Activated B cell treated with CpG ODN at 0.5 μM for 24 hours (primary cell): ENCODE measurements at regions of chr14 and their contacts with region 1.

Region 1: DNA sequence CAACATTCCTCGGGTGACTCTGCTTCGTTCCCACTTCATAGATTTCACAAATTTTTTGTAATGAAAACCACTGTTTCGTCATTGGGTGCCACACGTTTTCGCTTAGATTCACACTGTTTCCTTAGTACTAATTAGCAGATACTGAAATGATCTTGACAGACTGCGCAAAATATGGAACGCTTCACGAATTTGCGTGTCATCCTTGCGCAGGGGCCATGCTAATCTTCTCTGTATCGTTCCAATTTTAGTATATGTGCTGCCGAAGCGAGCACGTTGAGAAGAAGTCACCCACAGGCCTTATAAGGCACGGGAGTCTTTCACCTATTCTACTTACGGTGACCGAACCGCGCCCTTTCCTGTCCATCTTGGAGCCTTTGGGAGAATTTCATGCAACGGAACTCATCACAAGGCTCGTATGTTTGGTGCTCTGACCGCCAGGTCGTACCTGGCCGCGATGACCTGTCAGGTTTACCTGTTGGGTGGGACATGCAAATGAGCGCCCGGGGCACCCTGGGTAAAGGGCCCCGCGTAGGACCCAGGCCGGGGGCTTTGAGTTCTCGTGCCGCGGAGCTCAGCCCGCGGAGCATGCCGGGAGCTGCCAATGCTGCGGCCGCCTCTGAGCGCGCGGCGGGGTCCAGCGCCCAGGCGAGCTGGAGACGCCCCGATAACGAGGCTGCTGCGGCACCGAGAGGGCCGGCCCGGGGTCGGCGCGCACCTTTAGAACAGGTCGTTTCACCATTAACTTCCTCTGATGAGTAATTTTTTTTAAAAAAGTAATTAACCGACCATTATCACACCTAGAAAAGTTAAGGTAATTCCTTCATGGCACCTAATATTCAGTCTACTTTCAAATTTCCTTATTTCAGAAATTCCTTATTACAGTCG is at the start of gene RNU6-8:
- DNase-seq: peak; percentile 84
- ATAC-seq: peak; percentile 78
- H3K4me3 Mint-ChIP-seq: peak within 1 kb of the TSS; percentile 87
- H3K27ac Mint-ChIP-seq: peak within 1 kb of the TSS; percentile 100
- H3K4me1 Mint-ChIP-seq: peaks cover 51% of the 10 kb centered on the region
- H3K27me3 Mint-ChIP-seq: no peaks in the 10 kb centered on the region
- CTCF ChIP-seq: no peak
- total RNA-seq, gene RNU6-8: not detected in 2 replicates

Region 2: GRCh38 chr14:30874120-30874998 is 1328.9 kb before region 1 on chr14 and contains the start of gene COCH:
- CTCF ChIA-PET with region 1: no interaction called
- POLR2A ChIA-PET with region 1: no interaction called
- intact Hi-C with region 1: loop called (anchors 10 kb)
- DNase-seq: peak; percentile 66
- ATAC-seq: peak; percentile 76
- H3K4me3 Mint-ChIP-seq: peak within 1 kb of the TSS; percentile 88
- H3K27ac Mint-ChIP-seq: peak within 1 kb of the TSS; percentile 35
- H3K4me1 Mint-ChIP-seq: peaks cover 24% of the 10 kb centered on the region
- H3K27me3 Mint-ChIP-seq: peaks cover 11% of the 10 kb centered on the region
- CTCF ChIP-seq: no peak
- total RNA-seq, gene COCH: 10.2 and 10.4 TPM in 2 replicates

Region 3: DNA sequence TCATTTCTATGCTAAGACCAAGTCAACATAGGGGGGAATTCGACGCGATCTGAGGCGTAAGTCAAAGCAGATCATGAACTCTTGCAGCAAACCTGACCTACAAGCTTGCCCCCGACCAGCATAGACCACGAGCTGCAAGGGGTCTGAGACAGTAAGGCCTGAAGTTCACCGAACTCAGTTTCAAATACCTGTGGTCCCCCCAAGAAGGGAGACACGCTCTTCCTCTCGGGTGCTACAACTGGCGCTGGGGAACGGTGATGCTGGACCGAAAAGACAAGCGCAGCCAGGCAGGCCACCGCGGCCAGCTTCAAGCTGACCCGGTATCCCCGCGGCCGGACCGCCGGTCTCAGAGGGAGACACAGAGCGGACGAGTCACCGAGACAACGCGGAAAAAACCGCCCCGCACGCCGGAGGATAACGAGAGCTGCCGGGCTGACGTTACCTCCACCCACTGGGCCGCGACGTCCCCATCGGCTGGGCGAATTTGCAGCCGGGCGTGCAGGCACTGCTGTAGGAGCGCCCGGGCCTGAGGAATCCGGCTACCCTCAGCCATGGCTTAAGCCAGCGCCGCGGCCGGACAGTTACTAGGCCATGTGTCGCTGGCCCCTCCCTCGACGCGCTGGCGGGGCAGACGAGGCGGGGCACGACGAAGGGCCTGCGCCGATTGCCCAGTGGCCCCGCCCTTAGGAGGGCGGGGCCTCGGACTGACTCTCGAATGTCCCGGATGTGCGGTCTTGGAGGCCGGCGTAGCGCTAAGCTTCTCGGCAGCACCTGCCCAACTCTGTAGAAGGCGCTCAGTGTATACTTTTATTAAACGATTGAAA is 746.2 kb before region 1 on chr14 and contains the start of gene DTD2:
- CTCF ChIA-PET with region 1: no interaction called
- POLR2A ChIA-PET with region 1: interaction called, 4 read pairs
- intact Hi-C with region 1: loop called (anchors 1 kb)
- DNase-seq: peak; percentile 82
- ATAC-seq: peak; percentile 98
- H3K4me3 Mint-ChIP-seq: peak within 1 kb of the TSS; percentile 99
- H3K27ac Mint-ChIP-seq: peak within 1 kb of the TSS; percentile 96
- H3K4me1 Mint-ChIP-seq: peaks cover 31% of the 10 kb centered on the region
- H3K27me3 Mint-ChIP-seq: no peaks in the 10 kb centered on the region
- CTCF ChIP-seq: no peak
- total RNA-seq, gene DTD2: 19.8 and 21.3 TPM in 2 replicates

Region 4: DNA sequence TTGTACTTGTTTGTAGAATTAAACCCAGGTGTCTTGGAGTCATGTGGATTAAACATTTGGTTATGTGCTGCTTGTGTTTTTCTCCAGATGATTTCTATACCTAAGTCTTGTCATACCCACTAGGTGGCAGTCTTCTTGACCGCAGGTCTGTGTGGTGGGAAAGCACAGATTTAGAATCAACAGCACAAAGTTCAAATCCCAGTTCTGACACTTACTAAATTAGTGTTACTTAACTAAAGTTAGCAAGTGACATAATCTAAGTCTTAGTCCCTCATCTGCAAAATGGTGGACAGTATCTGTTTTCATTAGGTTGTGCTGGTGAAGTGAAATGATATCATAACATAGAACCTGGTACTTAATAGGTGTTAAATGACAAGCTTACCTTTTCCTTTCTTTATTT is 277.1 kb before region 1 on chr14:
- CTCF ChIA-PET with region 1: no interaction called
- POLR2A ChIA-PET with region 1: no interaction called
- intact Hi-C with region 1: loop called (anchors 5 kb)
- DNase-seq: no peak
- ATAC-seq: peak; percentile 47
- H3K4me3 Mint-ChIP-seq: no peak overlapping the region
- H3K27ac Mint-ChIP-seq: no peak overlapping the region
- H3K4me1 Mint-ChIP-seq: no peaks in the 10 kb centered on the region
- H3K27me3 Mint-ChIP-seq: no peaks in the 10 kb centered on the region
- CTCF ChIP-seq: no peak

Region 5: DNA sequence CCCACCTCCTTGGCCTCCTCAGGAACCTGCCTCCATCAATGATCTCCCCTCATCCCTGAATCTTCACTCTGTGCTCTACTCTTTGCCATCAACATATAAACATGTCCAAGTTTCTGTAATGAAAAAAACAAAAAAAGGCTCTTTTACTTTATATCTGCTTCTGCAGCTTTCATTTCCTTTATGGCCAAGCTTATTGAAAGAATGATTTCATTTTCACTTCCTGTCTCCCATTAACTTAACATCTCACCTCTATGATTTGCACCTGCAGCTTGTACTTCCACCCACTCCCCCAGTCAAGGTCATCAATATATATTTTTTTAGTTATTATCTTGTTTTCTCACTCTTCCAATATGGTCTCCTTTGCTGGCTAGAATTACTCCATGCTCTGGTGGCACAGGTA is 17.0 kb before region 1 on chr14:
- CTCF ChIA-PET with region 1: interaction called, 4 read pairs
- POLR2A ChIA-PET with region 1: interaction called, 3 read pairs
- intact Hi-C with region 1: loop called (anchors 2 kb)
- DNase-seq: no peak
- ATAC-seq: no peak
- H3K4me3 Mint-ChIP-seq: peak overlapping the region; percentile 60
- H3K27ac Mint-ChIP-seq: peak overlapping the region; percentile 80
- H3K4me1 Mint-ChIP-seq: peaks cover 21% of the 10 kb centered on the region
- H3K27me3 Mint-ChIP-seq: peaks cover 2% of the 10 kb centered on the region
- CTCF ChIP-seq: no peak

Region 6: DNA sequence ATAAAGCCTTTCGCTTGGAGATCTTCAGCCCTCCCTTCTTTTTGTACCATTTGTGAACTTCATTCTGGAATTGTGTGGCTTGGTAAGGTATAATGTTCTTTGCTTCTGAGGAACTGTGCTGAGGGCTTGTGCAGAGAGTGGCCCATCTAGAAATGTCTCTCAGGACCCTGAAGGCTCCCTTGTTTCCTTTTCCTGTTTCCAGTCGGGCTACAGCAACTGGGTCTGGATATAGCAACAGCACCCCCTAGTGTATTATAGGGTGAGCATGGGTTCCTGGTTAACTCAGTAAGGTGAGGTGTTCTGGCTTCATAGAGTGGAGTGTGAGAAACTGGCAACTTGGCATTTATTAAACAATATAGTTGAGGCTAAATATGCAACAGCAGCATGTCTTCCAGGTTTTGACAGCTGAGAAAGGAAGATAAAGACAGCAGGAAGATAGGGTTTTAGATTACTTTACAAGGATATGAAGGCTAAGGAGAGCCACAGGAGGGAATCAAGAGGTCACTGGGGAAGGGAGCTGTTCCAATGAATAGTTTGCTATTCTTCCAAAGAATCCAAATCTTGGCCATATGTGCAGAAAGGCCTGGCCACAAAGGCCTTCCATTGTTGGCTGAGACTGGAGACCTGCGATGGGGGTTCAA is 48.9 kb after region 1 on chr14:
- CTCF ChIA-PET with region 1: interaction called, 5 read pairs
- POLR2A ChIA-PET with region 1: interaction called, 3 read pairs
- intact Hi-C with region 1: loop called (anchors 2 kb)
- DNase-seq: no peak
- ATAC-seq: peak; percentile 88
- H3K4me3 Mint-ChIP-seq: no peak overlapping the region
- H3K27ac Mint-ChIP-seq: no peak overlapping the region
- H3K4me1 Mint-ChIP-seq: no peaks in the 10 kb centered on the region
- H3K27me3 Mint-ChIP-seq: no peaks in the 10 kb centered on the region
- CTCF ChIP-seq: peak; percentile 46

Region 7: DNA sequence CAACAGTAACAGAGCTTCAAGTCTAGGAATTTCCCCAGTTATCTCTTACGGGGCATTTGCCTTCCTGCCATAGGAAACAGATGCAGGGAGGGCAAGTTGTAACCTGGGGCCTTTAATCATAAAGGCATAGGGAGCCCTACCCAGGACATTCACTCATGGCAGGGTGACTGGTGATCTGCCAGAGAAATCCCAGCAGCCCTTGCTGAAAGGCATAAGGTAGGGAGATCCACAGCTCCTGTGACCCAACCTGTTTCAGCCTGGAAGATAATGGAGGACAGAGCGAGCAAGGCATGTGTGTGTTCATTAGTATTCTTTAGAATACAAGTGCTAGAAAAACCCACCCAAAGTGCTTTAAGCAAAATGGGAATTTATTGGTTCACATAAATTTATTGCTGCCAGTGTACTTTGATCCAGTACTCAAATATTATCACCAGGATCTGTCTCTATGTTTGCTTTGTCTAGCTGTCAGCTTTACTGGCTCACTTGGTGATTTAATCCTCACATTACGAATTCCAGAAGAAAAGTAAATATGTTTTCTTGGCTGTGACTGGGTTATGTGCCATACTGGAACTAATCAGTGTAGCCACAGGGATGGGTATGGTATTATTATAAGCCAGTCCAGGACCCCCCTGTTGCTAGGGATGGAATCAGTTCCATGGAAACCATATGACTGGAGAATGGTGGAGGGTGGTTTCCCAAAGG is 104.8 kb after region 1 on chr14:
- CTCF ChIA-PET with region 1: no interaction called
- POLR2A ChIA-PET with region 1: no interaction called
- intact Hi-C with region 1: no loop called
- DNase-seq: no peak
- ATAC-seq: no peak
- H3K4me3 Mint-ChIP-seq: no peak overlapping the region
- H3K27ac Mint-ChIP-seq: no peak overlapping the region
- H3K4me1 Mint-ChIP-seq: no peaks in the 10 kb centered on the region
- H3K27me3 Mint-ChIP-seq: no peaks in the 10 kb centered on the region
- CTCF ChIP-seq: no peak

Region 8: GRCh38 chr14:32341947-32342846 is 139.0 kb after region 1 on chr14:
- CTCF ChIA-PET with region 1: no interaction called
- POLR2A ChIA-PET with region 1: no interaction called
- intact Hi-C with region 1: no loop called
- DNase-seq: no peak
- ATAC-seq: no peak
- H3K4me3 Mint-ChIP-seq: no peak overlapping the region
- H3K27ac Mint-ChIP-seq: no peak overlapping the region
- H3K4me1 Mint-ChIP-seq: no peaks in the 10 kb centered on the region
- H3K27me3 Mint-ChIP-seq: no peaks in the 10 kb centered on the region
- CTCF ChIP-seq: no peak